Aorta (tissue), 5 donors: ENCODE measurements at regions of chr9 and their contacts with region 1.

Region 1: DNA sequence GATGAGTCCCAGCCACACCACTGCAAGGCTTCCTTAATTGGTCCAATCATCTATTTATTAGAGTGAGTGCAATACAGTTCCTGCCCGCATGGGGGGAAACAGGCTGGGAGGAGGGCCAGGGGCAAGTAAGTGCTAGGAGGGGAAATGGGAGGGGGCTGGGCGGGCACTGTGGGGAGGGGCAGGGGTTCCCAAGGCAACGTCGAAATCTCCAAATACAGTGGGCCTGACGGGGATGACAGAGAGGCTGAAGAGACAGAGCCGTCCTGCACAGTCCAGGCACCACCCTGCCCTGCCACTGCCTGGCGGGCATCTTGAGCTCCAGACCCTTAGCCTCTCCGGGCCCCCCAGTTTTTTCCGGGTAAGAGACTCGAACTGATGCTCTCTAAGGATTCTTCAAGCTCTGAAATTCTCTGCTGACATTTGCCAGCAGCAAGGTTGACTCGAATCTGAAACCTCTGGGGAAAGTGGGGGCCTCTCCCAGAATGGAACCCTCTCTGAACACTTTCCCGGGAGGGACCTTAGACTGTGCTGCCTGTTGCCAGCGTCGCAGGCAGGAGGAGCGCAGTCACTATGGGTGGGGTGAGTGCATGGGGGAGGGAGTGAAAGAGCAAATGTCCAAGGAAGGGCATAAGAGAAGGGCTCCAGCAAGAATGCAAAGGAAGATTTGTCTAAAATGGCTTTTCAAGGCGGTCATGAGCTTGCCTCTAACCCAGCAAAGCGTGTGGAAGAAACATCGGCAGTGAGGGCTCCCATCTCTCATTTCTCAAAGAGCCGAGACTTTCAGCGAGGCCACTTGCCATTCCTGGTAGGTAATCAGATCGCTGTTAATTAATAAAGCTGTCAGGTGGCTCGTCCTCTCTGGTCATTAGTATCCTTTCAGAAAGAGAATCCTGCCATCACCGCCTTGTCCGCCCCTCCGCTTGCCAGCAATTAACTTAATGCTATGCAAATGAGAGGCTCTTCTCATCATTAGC is 99.0 kb downstream of the GTF3C4 start:
- DNase-seq: peak; percentile 77 to 82
- ATAC-seq: peak; percentile 87
- H3K4me3 ChIP-seq: peak overlapping the region; percentile 90 to 93
- H3K27ac ChIP-seq: peak overlapping the region in 1 of 2 donors; percentile 35
- H3K4me1 ChIP-seq: no peaks in the 10 kb centered on the region
- H3K27me3 ChIP-seq: no peaks in the 10 kb centered on the region

Region 2: DNA sequence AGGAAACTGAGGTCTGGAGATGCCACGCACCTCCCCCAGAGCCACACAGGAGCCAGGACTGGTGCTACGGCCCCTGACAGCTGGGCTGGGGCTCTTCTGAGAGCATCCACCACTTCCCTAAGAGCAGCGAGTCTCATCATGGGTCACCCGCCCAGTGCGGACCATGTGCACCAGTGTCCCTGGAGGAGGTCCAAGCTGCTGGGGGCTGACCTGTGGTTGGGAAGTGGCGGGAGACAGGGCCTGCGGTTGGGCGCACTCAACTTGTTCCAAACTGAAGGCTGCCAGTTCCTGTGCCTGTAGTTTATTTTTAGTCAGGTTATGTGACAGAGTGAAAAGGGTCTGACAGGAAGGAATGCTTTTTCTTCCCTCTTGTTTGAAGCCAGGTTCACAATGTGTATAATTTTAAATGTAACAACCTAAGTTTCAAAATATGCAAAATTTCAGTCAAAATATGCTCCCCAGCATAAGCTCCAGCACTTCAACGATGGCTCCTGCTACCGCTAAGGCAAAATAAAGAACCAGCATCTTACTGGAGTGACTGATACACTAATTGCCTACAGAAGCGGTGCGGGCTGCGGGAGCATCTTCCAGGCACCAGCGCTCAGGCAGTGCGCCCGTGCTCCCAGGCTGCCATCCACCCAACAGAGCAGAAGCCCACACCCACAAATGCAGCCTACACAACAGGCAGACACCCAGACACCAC is 172.0 kb before region 1 on chr9:
- intact Hi-C with region 1: no loop called
- DNase-seq: peak; percentile 73 to 77
- ATAC-seq: no peak
- H3K4me3 ChIP-seq: no peak overlapping the region
- H3K27ac ChIP-seq: no peak overlapping the region
- H3K4me1 ChIP-seq: no peaks in the 10 kb centered on the region
- H3K27me3 ChIP-seq: no peaks in the 10 kb centered on the region

Region 3: GRCh38 chr9:132669698-132670456 is 99.3 kb before region 1 on chr9 and contains the start of gene DDX31:
- intact Hi-C with region 1: loop called in 1 of 2 experiments (anchors 2 kb)
- DNase-seq: peak; percentile 91 to 96
- ATAC-seq: peak; percentile 98
- H3K4me3 ChIP-seq: peak within 1 kb of the TSS; percentile 57 to 70
- H3K27ac ChIP-seq: peak within 1 kb of the TSS in 1 of 2 donors; percentile 66
- H3K4me1 ChIP-seq: peaks cover 0 to 9% of the 10 kb centered on the region in 2 donors
- H3K27me3 ChIP-seq: no peaks in the 10 kb centered on the region
- total RNA-seq, gene DDX31: 7.8 to 13.3 TPM